ENCODE measurements at regions of chr12 and their contacts with region 1.

Region 1: GRCh38 chr12:6662906-6663742 is at the start of gene ING4:
- DNase-seq: peak; percentile 99
- ATAC-seq: peak; percentile 99
- H3K4me3 Mint-ChIP-seq: peak within 1 kb of the TSS; percentile 86
- H3K27ac Mint-ChIP-seq: peak within 1 kb of the TSS; percentile 94
- H3K4me1 Mint-ChIP-seq: peaks cover 22% of the 10 kb centered on the region
- H3K27me3 Mint-ChIP-seq: no peaks in the 10 kb centered on the region
- total RNA-seq, gene ING4: 24.9 TPM

Region 2: DNA sequence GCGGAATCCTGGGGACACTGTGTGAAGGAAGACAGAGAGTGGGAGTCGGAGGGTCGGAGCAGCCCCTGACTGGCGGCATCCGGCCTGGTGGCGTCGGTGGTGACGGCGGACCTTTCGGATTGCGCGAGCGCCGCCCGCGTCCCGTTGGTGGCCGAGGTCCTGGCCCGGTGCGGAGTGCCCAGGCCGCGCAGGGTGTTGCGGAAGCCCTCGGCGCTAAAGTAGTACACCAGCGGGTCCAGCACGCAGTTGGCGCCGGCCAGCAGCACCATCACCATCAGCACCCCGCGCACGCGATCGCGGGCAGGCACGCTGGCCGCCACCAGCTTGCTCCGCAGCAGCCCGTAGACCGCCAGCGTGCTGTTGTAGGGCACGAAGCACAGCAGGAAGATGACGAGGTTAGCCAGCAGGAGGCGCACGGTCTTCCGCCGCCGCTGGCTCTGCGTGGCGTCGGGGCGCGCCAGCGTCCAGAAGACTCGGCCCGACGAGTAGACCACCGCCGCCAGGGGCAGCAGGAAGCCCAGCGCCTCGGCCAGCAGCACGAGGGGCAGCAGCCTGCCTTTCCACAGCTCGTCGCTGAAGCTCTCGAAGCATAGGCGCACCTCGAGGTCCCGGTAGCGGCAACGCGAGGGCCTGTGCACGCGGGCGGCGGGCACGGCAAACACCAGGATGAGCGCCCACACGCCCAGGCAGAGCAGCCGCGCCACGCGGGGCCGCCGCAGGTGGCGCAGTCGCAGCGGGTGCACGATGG is 42.8 kb before region 1 on chr12:
- CTCF ChIA-PET with region 1: interaction called, 12 read pairs
- POLR2A ChIA-PET with region 1: interaction called, 5 read pairs
- DNase-seq: peak; percentile 59
- ATAC-seq: peak; percentile 74
- H3K4me3 Mint-ChIP-seq: peak overlapping the region; percentile 64
- H3K27ac Mint-ChIP-seq: peak overlapping the region; percentile 64
- H3K4me1 Mint-ChIP-seq: peaks cover 27% of the 10 kb centered on the region
- H3K27me3 Mint-ChIP-seq: no peaks in the 10 kb centered on the region

Region 3: DNA sequence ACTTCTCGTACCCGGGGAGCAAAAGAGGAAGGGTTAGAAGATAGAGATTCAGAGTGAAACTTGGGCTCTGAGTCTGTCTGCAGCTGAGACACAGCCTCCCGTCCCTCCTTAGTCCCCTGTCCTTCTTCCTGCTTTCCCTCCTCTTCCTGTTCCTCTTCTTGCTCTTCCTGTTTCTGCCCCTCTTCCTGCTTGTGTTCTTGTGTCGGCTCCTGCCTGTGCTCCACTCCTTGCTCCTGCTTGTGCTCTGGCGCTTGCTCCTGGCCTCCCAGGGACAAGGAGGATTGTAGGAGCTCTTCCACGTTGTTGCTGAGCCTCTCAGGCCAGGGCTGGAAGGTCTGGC is 18.9 kb before region 1 on chr12:
- CTCF ChIA-PET with region 1: no interaction called
- POLR2A ChIA-PET with region 1: no interaction called
- DNase-seq: no peak
- ATAC-seq: no peak
- H3K4me3 Mint-ChIP-seq: no peak overlapping the region
- H3K27ac Mint-ChIP-seq: peak overlapping the region; percentile 27
- H3K4me1 Mint-ChIP-seq: peaks cover 18% of the 10 kb centered on the region
- H3K27me3 Mint-ChIP-seq: peaks cover 14% of the 10 kb centered on the region

Region 4: GRCh38 chr12:6697584-6698351 is 34.6 kb after region 1 on chr12:
- CTCF ChIA-PET with region 1: no interaction called
- POLR2A ChIA-PET with region 1: no interaction called
- DNase-seq: peak; percentile 41
- ATAC-seq: peak; percentile 40
- H3K4me3 Mint-ChIP-seq: no peak overlapping the region
- H3K27ac Mint-ChIP-seq: no peak overlapping the region
- H3K4me1 Mint-ChIP-seq: peaks cover 23% of the 10 kb centered on the region
- H3K27me3 Mint-ChIP-seq: peaks cover 40% of the 10 kb centered on the region

Measured in activated CD8-positive, alpha-beta T cell treated with anti-CD3 and anti-CD28 coated beads, Interleukin-2, amount 10 ng/mL, durations not matched to agents 7 days and 5 days (primary cell).